ENCODE measurements at regions of chr15 and their contacts with region 1.

Region 1: DNA sequence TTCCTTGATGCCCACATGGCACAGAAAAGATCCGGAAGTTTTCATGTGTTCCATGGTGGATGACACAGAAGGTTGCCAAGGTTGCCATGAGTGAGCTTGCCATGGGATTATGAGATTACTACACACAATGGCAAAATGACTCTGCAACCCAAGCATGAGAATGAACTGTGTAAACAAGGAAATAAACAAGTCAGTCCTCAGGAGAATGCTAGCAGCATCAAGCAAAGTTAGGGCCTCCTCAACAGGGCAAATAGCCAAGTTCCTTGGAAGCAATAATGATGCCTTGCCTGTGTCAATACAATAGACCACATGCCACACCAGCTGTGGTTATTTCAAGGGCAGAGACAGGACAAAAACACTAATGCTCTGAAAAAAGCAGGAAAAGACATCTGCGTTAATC is 41.8 kb downstream of the AQR start:
- DNase-seq: no peak

Region 2: GRCh38 chr15:34709866-34710265 is 217.9 kb before region 1 on chr15:
- intact Hi-C with region 1: loop called (anchors 10 kb)
- DNase-seq: no peak

Region 3: GRCh38 chr15:34987985-34988873 is 60.5 kb after region 1 on chr15 and contains the start of gene ZNF770:
- intact Hi-C with region 1: no loop called
- DNase-seq: peak; percentile 40 to 91 (median 81)

Region 4: GRCh38 chr15:35061825-35062737 is 134.4 kb after region 1 on chr15:
- intact Hi-C with region 1: no loop called
- DNase-seq: no peak